Ovary (tissue), 10 donors: ENCODE measurements at regions of chr2 and their contacts with region 1.

Region 1: DNA sequence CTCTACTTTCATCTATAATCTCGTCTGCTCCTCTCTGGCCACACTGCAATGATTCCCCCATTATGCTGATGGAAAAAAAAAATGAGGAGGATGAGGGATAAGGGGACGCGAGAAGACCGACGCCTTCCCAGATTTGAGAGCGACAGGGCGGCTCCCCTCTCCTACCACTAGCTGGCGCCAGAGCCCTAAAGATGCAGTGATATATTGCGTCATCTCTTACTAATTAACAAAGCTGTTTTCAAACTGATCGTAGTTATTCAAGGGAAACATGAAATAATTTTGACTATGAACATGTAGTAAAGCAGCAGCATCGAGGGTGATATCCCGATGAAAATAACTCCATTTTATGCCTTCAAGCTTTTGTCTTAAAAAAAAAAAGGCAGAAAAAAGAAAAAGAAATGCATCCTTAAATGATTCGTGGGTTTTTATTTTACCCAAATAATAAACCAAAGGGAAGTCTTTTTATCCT is 48.0 kb upstream of the HNRNPA3 start:
- DNase-seq: peak; percentile 83 to 91 (median 90)
- H3K4me3 ChIP-seq: peak overlapping the region; percentile 22
- H3K27ac ChIP-seq: peak overlapping the region; percentile 13 to 91
- H3K4me1 ChIP-seq: peaks cover 3% of the 10 kb centered on the region
- H3K27me3 ChIP-seq: no peaks in the 10 kb centered on the region
- CTCF ChIP-seq: peak; percentile 92 to 98 (median 97)
- EP300 ChIP-seq: no peak
- POLR2A ChIP-seq: no peak

Region 2: GRCh38 chr2:176126929-176127773 is 1037.5 kb before region 1 on chr2:
- intact Hi-C with region 1: loop called in 1 of 4 experiments (anchors 5 kb)
- DNase-seq: peak; percentile 67 to 87 (median 82)
- H3K4me3 ChIP-seq: peak overlapping the region; percentile 10
- H3K27ac ChIP-seq: no peak overlapping the region
- H3K4me1 ChIP-seq: peaks cover 2% of the 10 kb centered on the region
- H3K27me3 ChIP-seq: no peaks in the 10 kb centered on the region
- CTCF ChIP-seq: peak; percentile 88 to 95 (median 90)
- EP300 ChIP-seq: no peak
- POLR2A ChIP-seq: no peak

Region 3: DNA sequence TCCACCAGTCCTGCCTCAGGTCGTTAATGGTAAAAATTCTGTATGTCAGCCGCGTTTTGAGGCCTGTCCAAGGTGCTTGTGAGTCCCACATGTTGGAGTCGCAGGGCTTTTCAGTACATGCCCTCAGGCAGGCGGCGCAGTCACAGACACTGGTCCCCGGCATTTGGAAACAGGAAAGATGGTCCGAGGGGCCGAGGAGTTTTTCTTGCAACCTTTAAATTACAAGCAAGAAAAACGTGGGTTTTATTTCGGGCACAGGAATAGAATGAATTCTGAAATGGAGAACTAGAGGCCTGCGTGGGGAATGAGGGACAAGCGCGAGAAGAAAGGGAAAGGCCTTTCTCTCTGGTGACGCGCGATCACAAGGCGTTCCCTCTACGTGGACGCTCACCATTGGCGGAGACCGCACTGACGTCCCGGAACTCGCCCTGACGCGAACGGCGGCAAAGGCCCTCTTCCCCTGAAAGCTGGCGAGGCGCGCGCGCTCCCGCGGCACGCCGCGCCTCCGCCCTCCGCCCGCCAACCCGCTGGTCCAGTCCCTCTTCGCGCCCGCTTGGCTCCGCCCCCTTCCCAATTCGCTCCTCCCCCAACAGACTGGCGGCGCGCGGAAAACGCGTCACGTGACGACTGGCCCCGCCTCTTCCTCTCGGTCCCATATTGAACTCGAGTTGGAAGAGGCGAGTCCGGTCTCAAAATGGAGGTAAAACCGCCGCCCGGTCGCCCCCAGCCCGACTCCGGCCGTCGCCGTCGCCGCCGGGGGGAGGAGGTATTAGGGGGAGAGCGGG is 47.7 kb after region 1 on chr2 and contains the start of gene HNRNPA3:
- intact Hi-C with region 1: loop called in 2 of 4 experiments (anchors 5 kb)
- DNase-seq: peak; percentile 99 to 100 (median 100)
- H3K4me3 ChIP-seq: peak within 1 kb of the TSS; percentile 94
- H3K27ac ChIP-seq: peak within 1 kb of the TSS; percentile 99
- H3K4me1 ChIP-seq: peaks cover 3% of the 10 kb centered on the region
- H3K27me3 ChIP-seq: no peaks in the 10 kb centered on the region
- CTCF ChIP-seq: peak in 2 of 3 donors; percentile 32 to 33
- EP300 ChIP-seq: peak; percentile 89
- POLR2A ChIP-seq: peak; percentile 95
- total RNA-seq, gene HNRNPA3: 71.0 to 240 (median 216) TPM

Region 4: GRCh38 chr2:177332041-177332991 is 167.7 kb after region 1 on chr2:
- intact Hi-C with region 1: loop called (anchors 2 to 5 kb)
- DNase-seq: peak; percentile 46 to 70 (median 56)
- H3K4me3 ChIP-seq: no peak overlapping the region
- H3K27ac ChIP-seq: peak overlapping the region in 1 of 2 donors; percentile 59
- H3K4me1 ChIP-seq: peaks cover 1% of the 10 kb centered on the region
- H3K27me3 ChIP-seq: no peaks in the 10 kb centered on the region
- CTCF ChIP-seq: peak; percentile 55 to 78 (median 68)
- EP300 ChIP-seq: no peak
- POLR2A ChIP-seq: no peak

Region 5: DNA sequence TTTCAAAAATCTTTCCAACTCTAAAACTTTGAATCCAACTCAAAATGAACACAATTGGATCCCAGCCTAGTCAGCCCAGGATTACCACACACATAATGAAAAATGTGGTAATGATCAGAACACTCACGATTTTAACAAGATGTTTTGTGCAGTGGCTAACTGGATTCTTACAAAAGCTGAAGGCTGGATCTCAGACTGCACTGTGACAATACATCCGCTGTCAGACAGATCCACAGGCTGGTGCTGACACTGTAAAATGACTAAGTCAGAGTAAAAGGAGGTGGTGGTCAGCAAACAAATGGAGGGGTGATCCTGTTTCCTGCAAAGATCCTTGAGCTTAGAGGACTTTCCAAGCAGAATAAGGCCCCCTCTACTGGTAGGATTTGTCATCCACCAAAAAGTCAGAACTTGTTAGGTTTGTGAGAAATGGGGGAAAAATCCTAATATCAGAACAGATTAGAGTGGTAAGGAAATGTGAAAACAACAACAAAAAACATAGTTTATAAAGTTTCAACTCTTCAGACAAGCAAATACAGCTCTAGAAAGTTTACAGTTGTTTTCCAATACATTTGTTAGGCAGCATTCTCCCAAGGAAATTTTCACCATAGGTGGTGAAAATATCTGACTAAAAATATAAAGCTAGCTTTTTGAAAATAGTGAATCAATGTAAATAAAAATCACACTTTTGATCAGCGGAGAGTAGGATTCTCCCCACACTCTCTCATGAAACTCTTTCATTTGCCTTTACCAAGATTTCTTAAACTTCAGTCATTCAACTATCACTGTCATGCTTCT is 439.9 kb after region 1 on chr2:
- intact Hi-C with region 1: loop called in 1 of 4 experiments (anchors 10 kb)
- DNase-seq: peak in 4 of 5 donors; percentile 24 to 65 (median 26)
- H3K4me3 ChIP-seq: no peak overlapping the region
- H3K27ac ChIP-seq: no peak overlapping the region
- H3K4me1 ChIP-seq: peaks cover 10% of the 10 kb centered on the region
- H3K27me3 ChIP-seq: no peaks in the 10 kb centered on the region
- CTCF ChIP-seq: peak; percentile 27 to 65 (median 61)
- EP300 ChIP-seq: no peak
- POLR2A ChIP-seq: no peak